GM12878 (cell line): ENCODE measurements at regions of chr9 and their contacts with region 1.

Region 1: GRCh38 chr9:107260437-107261086 is 22.5 kb upstream of the RAD23B start:
- DNase-seq: peak; percentile 88
- ATAC-seq: peak; percentile 98
- H3K4me3 ChIP-seq: peak overlapping the region; percentile 27; the same call in 1 of the 2 replicates
- H3K27ac ChIP-seq: peak overlapping the region; percentile 36
- H3K4me1 ChIP-seq: peaks cover 11% of the 10 kb centered on the region
- H3K27me3 ChIP-seq: no peaks in the 10 kb centered on the region
- CTCF ChIP-seq: no peak
- EP300 ChIP-seq: peak; percentile 95 to 97
- POLR2A ChIP-seq: no peak
- RAD21 ChIP-seq: no peak

Region 2: GRCh38 chr9:107178293-107178692 is 82.3 kb before region 1 on chr9:
- CTCF ChIA-PET with region 1: interaction called, 39 read pairs
- POLR2A ChIA-PET with region 1: interaction called, 11 read pairs
- RAD21 ChIA-PET with region 1: interaction called, 78 read pairs
- SMC1A ChIA-PET with region 1: interaction called, 43 read pairs
- in situ Hi-C with region 1: no loop called
- intact Hi-C with region 1: loop called (anchors 5 kb)
- DNase-seq: no peak
- ATAC-seq: no peak
- H3K4me3 ChIP-seq: no peak overlapping the region
- H3K27ac ChIP-seq: no peak overlapping the region
- H3K4me1 ChIP-seq: peaks cover 13% of the 10 kb centered on the region
- H3K27me3 ChIP-seq: no peaks in the 10 kb centered on the region
- CTCF ChIP-seq: no peak
- EP300 ChIP-seq: no peak
- POLR2A ChIP-seq: no peak
- RAD21 ChIP-seq: no peak

Region 3: DNA sequence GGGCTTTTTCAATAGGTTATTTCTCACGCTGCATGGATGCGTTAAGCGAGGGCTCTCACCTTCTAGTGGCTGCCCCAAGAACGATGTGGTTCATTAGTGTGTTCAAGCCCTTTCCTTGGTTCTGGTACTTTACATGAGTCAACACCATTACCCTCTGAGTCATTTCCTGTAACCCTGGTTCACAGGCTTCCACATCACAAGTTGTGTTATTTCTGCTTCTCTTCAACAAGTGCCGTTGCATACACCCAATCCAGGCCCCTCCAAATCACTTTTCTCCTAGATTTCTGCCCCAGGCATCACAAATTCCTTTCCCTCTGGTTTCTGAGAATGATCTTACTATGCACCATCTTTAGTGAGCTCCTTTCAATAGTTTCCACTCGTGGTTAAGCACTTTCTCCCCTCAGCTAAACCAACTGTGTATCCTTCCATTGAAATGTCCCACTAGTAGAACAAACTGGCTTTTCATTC is 47.0 kb before region 1 on chr9:
- CTCF ChIA-PET with region 1: interaction called, 7 read pairs
- POLR2A ChIA-PET with region 1: interaction called, 28 read pairs
- RAD21 ChIA-PET with region 1: interaction called, 58 read pairs
- SMC1A ChIA-PET with region 1: interaction called, 40 read pairs
- in situ Hi-C with region 1: no loop called
- intact Hi-C with region 1: loop called (anchors 2 kb)
- DNase-seq: peak; percentile 76
- ATAC-seq: peak; percentile 96
- H3K4me3 ChIP-seq: no peak overlapping the region
- H3K27ac ChIP-seq: peak overlapping the region; percentile 46; the same call in 1 of the 2 replicates
- H3K4me1 ChIP-seq: peaks cover 7% of the 10 kb centered on the region; the same call in 1 of the 2 replicates
- H3K27me3 ChIP-seq: no peaks in the 10 kb centered on the region
- CTCF ChIP-seq: no peak
- EP300 ChIP-seq: peak; percentile 44 to 72; a peak in 1 of 4 replicates
- POLR2A ChIP-seq: no peak
- RAD21 ChIP-seq: no peak

Region 4: GRCh38 chr9:107243751-107244150 is 16.8 kb before region 1 on chr9:
- CTCF ChIA-PET with region 1: interaction called, 16 read pairs
- POLR2A ChIA-PET with region 1: interaction called, 9 read pairs
- RAD21 ChIA-PET with region 1: interaction called, 27 read pairs
- SMC1A ChIA-PET with region 1: interaction called, 55 read pairs
- in situ Hi-C with region 1: no loop called
- intact Hi-C with region 1: no loop called
- DNase-seq: no peak
- ATAC-seq: peak; percentile 85
- H3K4me3 ChIP-seq: no peak overlapping the region
- H3K27ac ChIP-seq: no peak overlapping the region
- H3K4me1 ChIP-seq: no peaks in the 10 kb centered on the region
- H3K27me3 ChIP-seq: no peaks in the 10 kb centered on the region
- CTCF ChIP-seq: no peak
- EP300 ChIP-seq: no peak; a peak in 1 of 4 replicates
- POLR2A ChIP-seq: no peak
- RAD21 ChIP-seq: no peak

Region 5: DNA sequence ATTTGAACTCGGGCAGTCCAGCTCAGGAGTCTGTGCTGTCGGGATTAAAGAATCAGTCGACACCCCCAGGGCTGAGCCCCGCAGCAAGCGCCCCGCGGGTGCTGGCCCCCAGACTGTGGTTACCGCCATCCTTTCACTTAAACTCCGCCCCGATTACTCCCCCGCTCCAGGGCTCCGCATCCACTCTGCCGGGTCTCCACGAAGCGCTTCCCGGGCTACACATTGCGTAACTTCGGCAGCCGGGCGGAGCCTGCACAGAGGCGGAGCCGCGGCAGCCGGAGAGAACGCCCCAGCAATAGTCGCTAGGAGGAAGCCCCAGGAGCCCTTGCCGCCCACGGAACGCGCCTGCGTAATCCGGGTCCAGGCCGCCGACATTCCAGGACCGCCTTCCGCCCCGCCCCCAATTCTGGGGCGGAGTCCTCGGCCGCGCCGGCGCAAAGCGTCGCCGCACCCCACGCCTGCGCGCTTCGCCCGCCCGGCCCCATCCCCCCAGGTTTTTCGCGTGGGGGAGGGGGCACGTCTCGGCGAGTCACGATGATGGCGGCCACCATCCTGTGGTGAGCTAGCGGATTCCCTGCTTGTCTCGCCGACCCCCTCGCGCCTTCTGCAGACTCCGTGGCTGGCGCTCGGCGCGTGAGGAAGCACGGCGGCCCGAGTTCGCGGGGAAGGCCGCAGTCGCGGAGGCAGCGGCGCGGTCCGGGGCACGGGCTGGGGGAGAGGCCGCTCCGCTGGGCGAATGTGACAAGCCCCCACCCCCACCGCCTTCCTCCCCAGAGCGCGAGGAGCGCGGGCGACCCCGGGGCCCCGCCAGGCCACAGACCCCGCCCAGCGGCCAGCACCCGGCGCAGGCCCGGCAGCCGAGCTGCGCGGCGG is 22.4 kb after region 1 on chr9 and contains the start of gene RAD23B:
- CTCF ChIA-PET with region 1: interaction called, 14 read pairs
- POLR2A ChIA-PET with region 1: interaction called, 39 read pairs
- RAD21 ChIA-PET with region 1: interaction called, 84 read pairs
- SMC1A ChIA-PET with region 1: interaction called, 104 read pairs
- in situ Hi-C with region 1: no loop called
- intact Hi-C with region 1: loop called (anchors 2 kb)
- DNase-seq: peak; percentile 88
- ATAC-seq: peak; percentile 89
- H3K4me3 ChIP-seq: peak within 1 kb of the TSS; percentile 82
- H3K27ac ChIP-seq: peak within 1 kb of the TSS; percentile 92
- H3K4me1 ChIP-seq: peaks cover 8% of the 10 kb centered on the region; the same call in 1 of the 2 replicates
- H3K27me3 ChIP-seq: no peaks in the 10 kb centered on the region
- CTCF ChIP-seq: no peak
- EP300 ChIP-seq: no peak
- POLR2A ChIP-seq: peak; percentile 93
- RAD21 ChIP-seq: no peak
- polyA plus RNA-seq, gene RAD23B: 24.1 to 26.4 TPM